K562 (cell line): ENCODE measurements at regions of chr12 and their contacts with region 1.

Region 1: DNA sequence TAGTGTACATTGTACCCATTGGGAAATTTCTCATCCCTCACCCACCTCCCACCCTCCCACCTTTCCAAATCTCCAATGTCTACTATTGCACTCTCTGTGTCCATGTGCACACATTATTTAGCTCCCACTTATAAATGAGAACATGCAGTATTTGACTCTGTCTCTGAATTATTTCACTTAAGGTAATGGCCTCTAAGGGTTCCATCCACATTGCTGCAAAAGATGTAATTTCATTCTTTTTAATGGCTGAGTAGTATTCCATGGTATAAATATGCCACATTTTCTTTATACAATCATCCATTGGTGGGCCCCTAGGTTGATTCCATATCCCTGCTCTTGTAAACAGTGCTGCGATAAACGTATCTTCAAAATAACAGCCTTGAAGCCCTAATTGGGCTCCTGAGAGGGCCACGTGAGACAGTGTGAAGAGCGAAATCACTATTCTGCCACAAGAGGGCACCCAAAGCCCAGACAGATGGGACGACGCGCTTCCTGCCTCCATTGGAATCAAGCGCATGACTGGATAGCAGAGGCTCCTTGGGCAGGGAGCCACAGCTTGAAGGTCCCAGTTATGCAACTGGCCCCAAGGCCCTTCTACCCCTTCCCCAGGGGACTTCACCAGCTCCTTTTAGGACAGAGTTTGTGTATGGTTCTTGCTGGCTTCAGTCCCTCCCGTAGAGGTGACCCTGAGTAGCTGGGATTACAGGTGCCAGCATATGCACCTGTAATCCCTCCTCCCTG is 21.3 kb upstream of the CD27 start:
- DNase-seq: peak; percentile 73 to 89 (median 75)
- ATAC-seq: peak; percentile 99
- H3K4me3 ChIP-seq: no peak overlapping the region
- H3K27ac ChIP-seq: no peak overlapping the region
- H3K4me1 ChIP-seq: peaks cover 2 to 5% of the 10 kb centered on the region in 2 experiments; a peak in 4 of 5 replicates
- H3K27me3 ChIP-seq: no peaks in the 10 kb centered on the region
- CTCF ChIP-seq: peak; percentile 82 to 84 (median 82)
- EP300 ChIP-seq: no peak
- POLR2A ChIP-seq: no peak
- RAD21 ChIP-seq: peak; percentile 90 to 92

Region 2: GRCh38 chr12:6307529-6307928 is 115.9 kb before region 1 on chr12:
- CTCF ChIA-PET with region 1: no interaction called
- POLR2A ChIA-PET with region 1: no interaction called
- in situ Hi-C with region 1: no loop called
- intact Hi-C with region 1: no loop called
- DNase-seq: no peak
- ATAC-seq: no peak
- H3K4me3 ChIP-seq: no peak overlapping the region
- H3K27ac ChIP-seq: no peak overlapping the region
- H3K4me1 ChIP-seq: peaks cover 0 to 16% of the 10 kb centered on the region in 2 experiments; a peak in 3 of 5 replicates
- H3K27me3 ChIP-seq: no peaks in the 10 kb centered on the region
- CTCF ChIP-seq: no peak
- EP300 ChIP-seq: no peak
- POLR2A ChIP-seq: no peak
- RAD21 ChIP-seq: no peak

Region 3: DNA sequence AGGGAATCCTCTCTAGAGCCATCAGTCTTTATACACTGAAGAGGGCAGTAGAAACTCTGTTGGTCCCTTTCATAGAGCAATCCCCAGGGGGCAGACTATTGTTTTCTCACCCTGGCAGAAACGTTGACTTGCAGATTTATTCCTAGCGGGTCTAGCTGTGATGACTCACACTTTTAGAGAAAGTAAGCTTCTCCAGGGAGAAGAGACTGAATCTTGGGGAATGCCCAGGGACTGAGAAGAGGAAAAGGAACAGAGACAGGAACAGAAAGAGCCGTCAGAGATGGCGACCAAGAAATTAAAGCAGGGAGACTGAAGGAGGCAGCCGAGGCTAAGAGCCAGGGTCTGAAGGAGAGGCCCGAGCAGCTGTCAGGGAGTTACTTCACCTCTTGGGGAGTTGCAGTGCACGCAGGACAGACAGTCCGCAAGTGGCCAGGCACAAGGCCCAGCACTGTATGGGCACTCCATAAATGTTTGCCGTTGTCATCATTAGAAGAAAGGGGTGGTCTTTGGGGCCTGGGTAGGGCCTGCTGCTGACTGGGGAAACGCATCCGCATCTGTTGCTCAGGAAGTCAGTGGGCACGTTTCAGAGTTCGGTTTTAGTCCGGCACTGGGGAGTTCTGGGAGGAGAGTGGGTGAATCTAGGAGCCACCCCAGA is 100.0 kb before region 1 on chr12:
- CTCF ChIA-PET with region 1: no interaction called
- POLR2A ChIA-PET with region 1: no interaction called
- in situ Hi-C with region 1: no loop called
- intact Hi-C with region 1: loop called (anchors 5 kb)
- DNase-seq: peak; percentile 63 to 77 (median 70)
- ATAC-seq: peak; percentile 84
- H3K4me3 ChIP-seq: no peak overlapping the region
- H3K27ac ChIP-seq: peak overlapping the region; percentile 69; the same call in 2 of the 3 replicates
- H3K4me1 ChIP-seq: peaks cover 16 to 21% of the 10 kb centered on the region in 2 experiments; a peak in 4 of 5 replicates
- H3K27me3 ChIP-seq: peaks cover 0 to 6% of the 10 kb centered on the region in 2 experiments; a peak in 4 of 5 replicates
- CTCF ChIP-seq: peak; percentile 67 to 93 (median 90)
- EP300 ChIP-seq: peak; percentile 40; the same call in 1 of the 2 replicates
- POLR2A ChIP-seq: no peak
- RAD21 ChIP-seq: peak; percentile 48 to 72

Region 4: DNA sequence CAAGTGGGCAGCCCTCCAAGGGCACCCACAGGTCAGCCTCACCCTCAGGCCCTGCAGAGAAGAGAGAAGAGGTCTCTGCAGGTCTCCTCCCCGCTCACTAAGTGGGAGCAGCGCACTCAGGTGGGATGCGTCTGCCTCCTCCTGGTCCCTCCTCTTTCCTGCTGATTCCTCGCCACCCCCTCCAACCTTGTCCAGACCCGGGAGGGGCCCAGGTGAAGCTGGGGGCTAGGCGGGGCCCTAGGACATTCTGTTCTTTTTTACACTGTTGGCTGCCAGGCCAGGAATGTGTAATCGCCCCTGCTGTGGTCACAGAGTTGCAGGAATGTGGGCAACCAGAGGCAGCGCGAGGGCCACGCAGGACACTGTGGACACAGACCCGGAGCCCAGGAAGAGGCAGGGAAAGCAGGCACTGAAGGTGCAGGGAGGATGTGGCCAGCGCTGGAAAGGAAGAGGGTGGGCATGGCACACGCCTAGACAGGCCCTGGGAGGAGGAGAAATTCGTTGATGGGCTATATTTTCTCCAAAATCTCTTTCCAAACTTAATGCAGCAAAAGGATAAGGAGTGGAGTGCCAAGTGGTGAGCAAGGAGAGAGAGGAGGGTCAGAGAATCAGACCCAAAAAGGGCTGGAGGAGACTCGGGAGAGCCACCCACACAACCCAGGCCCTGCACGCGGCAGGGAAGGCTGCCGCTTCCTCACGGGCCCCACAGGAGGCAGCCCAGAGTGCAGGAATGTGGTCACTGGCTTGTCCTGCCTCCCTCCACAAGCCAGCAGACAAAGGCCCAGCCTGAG is 47.2 kb before region 1 on chr12:
- CTCF ChIA-PET with region 1: no interaction called
- POLR2A ChIA-PET with region 1: no interaction called
- in situ Hi-C with region 1: no loop called
- intact Hi-C with region 1: no loop called
- DNase-seq: peak; percentile 39 to 58 (median 42)
- ATAC-seq: peak; percentile 91
- H3K4me3 ChIP-seq: no peak overlapping the region
- H3K27ac ChIP-seq: no peak overlapping the region
- H3K4me1 ChIP-seq: peaks cover 18 to 32% of the 10 kb centered on the region in 2 experiments; a peak in 4 of 5 replicates
- H3K27me3 ChIP-seq: no peaks in the 10 kb centered on the region
- CTCF ChIP-seq: peak; percentile 23 to 33 (median 33); a peak in 2 of 6 replicates
- EP300 ChIP-seq: no peak
- POLR2A ChIP-seq: no peak
- RAD21 ChIP-seq: 0 out of 4 replicates have a peak, but pooled peaks of 1 of the 2 experiments have one; percentile 22

Region 5: DNA sequence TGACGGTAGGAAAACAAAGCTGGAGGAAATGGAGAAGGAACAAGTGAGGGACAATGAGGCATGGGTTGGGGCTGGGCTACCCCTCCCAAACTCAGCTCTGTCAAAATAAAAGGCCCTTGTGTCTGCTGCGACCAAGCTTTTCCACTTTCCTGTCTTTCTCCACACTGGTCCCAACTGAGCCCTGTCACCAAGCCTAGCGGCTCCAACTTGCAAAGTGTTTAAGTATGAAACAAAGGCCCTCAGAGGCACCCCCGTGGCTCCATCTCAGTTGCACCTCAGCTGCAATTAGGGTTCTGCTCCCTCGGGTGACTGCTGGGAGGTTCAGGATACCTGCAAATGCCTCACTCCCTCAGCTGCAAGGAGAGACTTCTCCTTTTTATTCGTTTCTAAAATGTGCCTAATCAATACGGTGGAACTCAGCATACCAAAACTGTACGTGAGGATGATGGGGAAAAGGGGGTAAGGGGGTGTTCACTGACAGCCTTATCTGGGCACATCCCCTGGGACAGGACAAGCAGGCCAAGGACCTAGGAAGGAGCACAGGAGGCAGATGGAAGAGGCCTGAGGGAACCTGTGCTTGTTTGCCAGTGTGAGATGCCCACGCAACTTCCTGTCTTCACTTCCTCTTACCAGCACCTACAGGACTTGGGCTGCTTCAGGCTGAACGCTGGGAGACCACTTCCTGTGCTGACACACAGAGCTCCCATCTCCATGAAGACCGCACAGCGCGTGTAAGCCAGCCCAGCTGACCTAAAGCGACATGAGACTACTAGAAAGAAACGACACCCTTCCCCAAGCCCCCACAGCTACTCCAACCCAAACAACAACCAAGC is 38.2 kb after region 1 on chr12:
- CTCF ChIA-PET with region 1: interaction called, 19 read pairs
- POLR2A ChIA-PET with region 1: no interaction called
- in situ Hi-C with region 1: loop called (anchors 5 kb)
- intact Hi-C with region 1: loop called (anchors 1 kb)
- DNase-seq: no peak
- ATAC-seq: no peak
- H3K4me3 ChIP-seq: no peak overlapping the region
- H3K27ac ChIP-seq: no peak overlapping the region
- H3K4me1 ChIP-seq: no peaks in the 10 kb centered on the region; a peak in 1 of 5 replicates
- H3K27me3 ChIP-seq: no peaks in the 10 kb centered on the region
- CTCF ChIP-seq: no peak
- EP300 ChIP-seq: no peak
- POLR2A ChIP-seq: no peak
- RAD21 ChIP-seq: no peak

Region 6: DNA sequence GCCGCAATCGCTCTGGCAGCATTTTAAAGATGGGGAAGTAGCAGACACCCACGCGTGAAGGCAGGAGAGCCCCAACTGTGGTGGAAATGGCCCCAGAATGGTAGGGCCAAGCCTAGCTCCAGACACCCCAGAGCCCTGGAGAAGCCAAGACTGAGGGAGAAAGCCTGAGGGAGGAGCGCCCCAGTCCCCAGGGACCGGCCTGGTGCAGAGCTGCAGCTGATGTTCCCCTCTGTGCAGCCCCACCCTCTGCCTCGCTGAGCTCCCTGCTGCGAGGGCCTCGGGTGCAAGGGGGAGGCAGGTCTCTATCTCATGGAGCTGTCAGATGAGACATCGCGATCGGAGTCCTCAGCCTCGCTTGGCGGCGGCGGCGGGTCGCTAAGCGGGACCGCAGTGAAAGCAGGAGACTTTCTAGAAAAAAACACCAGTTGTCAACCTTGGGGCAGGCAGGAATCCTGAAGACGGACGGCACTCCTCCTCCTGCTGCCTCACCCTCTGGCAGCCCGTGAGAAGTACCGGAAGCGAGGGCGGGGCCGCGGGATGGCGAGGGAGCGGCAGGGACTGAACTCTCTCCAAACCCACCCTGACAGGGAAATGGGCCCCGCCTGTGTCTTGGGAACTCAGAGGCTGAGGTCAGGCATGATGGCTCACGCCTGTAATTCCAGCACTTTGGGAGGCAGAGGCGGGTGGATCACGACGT is 116.9 kb after region 1 on chr12:
- CTCF ChIA-PET with region 1: no interaction called
- POLR2A ChIA-PET with region 1: no interaction called
- in situ Hi-C with region 1: no loop called
- intact Hi-C with region 1: loop called (anchors 2 kb)
- DNase-seq: peak; percentile 60 to 81 (median 66)
- ATAC-seq: peak; percentile 70
- H3K4me3 ChIP-seq: peak overlapping the region; percentile 7
- H3K27ac ChIP-seq: peak overlapping the region; percentile 53; the same call in 1 of the 3 replicates
- H3K4me1 ChIP-seq: peaks cover 59 to 75% of the 10 kb centered on the region in 2 experiments
- H3K27me3 ChIP-seq: no peaks in the 10 kb centered on the region
- CTCF ChIP-seq: no peak
- EP300 ChIP-seq: no peak
- POLR2A ChIP-seq: no peak
- RAD21 ChIP-seq: no peak